GM12878 (cell line): ENCODE measurements at regions of chrX and their contacts with region 1.

Region 1: DNA sequence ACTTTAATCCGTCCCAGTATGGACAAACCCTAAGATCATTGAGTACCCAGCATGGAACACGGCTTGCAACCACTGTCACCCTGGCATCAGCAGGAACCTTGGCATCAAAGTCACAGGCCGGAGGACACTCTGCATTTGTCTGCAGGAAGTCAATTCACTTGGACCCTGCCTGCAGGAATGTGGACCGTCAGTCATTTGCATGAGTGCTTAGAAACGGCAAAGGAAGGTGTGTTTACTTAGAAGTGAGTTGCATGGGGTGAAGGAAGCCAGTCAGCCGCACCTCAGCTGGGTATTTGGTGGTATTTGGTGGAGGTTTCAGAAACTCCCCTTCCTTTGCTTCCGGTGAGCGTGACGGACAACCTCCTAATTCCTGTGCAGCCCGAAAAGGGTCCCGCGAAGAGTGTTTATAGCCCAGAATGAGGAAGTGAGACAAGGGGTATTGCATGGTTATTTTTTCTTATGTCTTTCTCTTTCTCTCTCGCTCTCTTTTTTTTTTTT is 15.5 kb downstream of the P2RY8 start:
- DNase-seq: peak; percentile 99
- ATAC-seq: peak; percentile 92
- H3K4me3 ChIP-seq: peak overlapping the region; percentile 50; the same call in 1 of the 2 replicates
- H3K27ac ChIP-seq: peak overlapping the region; percentile 91
- H3K4me1 ChIP-seq: peaks cover 44% of the 10 kb centered on the region
- H3K27me3 ChIP-seq: no peaks in the 10 kb centered on the region
- CTCF ChIP-seq: no peak
- EP300 ChIP-seq: peak; percentile 98 to 99
- POLR2A ChIP-seq: peak; percentile 48
- RAD21 ChIP-seq: peak; percentile 33; the same call in 1 of the 2 replicates

Region 2: GRCh38 chrX:1316527-1316926 is 205.0 kb before region 1 on chrX:
- CTCF ChIA-PET with region 1: no interaction called
- POLR2A ChIA-PET with region 1: no interaction called
- RAD21 ChIA-PET with region 1: no interaction called
- SMC1A ChIA-PET with region 1: no interaction called
- in situ Hi-C with region 1: no loop called
- intact Hi-C with region 1: no loop called
- DNase-seq: no peak
- ATAC-seq: no peak
- H3K4me3 ChIP-seq: no peak overlapping the region
- H3K27ac ChIP-seq: no peak overlapping the region
- H3K4me1 ChIP-seq: no peaks in the 10 kb centered on the region; the same call in 1 of the 2 replicates
- H3K27me3 ChIP-seq: no peaks in the 10 kb centered on the region
- CTCF ChIP-seq: no peak
- EP300 ChIP-seq: no peak
- POLR2A ChIP-seq: no peak
- RAD21 ChIP-seq: no peak

Region 3: GRCh38 chrX:1500701-1501624 is 20.5 kb before region 1 on chrX:
- CTCF ChIA-PET with region 1: no interaction called
- POLR2A ChIA-PET with region 1: no interaction called
- RAD21 ChIA-PET with region 1: no interaction called
- SMC1A ChIA-PET with region 1: no interaction called
- in situ Hi-C with region 1: no loop called
- intact Hi-C with region 1: loop called (anchors 1 kb)
- DNase-seq: peak; percentile 90
- ATAC-seq: peak; percentile 69
- H3K4me3 ChIP-seq: no peak overlapping the region
- H3K27ac ChIP-seq: peak overlapping the region; percentile 87
- H3K4me1 ChIP-seq: peaks cover 53% of the 10 kb centered on the region
- H3K27me3 ChIP-seq: no peaks in the 10 kb centered on the region
- CTCF ChIP-seq: no peak
- EP300 ChIP-seq: peak; percentile 49 to 71; a peak in 2 of 4 replicates
- POLR2A ChIP-seq: no peak
- RAD21 ChIP-seq: 0 out of 2 replicates have a peak, but pooled peaks have one; percentile 3

Region 4: GRCh38 chrX:1507511-1508463 is 13.7 kb before region 1 on chrX:
- CTCF ChIA-PET with region 1: no interaction called
- POLR2A ChIA-PET with region 1: no interaction called
- RAD21 ChIA-PET with region 1: no interaction called
- SMC1A ChIA-PET with region 1: no interaction called
- in situ Hi-C with region 1: no loop called
- intact Hi-C with region 1: loop called (anchors 1 kb)
- DNase-seq: peak; percentile 95
- ATAC-seq: peak; percentile 86
- H3K4me3 ChIP-seq: peak overlapping the region; percentile 9; the same call in 1 of the 2 replicates
- H3K27ac ChIP-seq: peak overlapping the region; percentile 89
- H3K4me1 ChIP-seq: peaks cover 48% of the 10 kb centered on the region
- H3K27me3 ChIP-seq: no peaks in the 10 kb centered on the region
- CTCF ChIP-seq: no peak
- EP300 ChIP-seq: peak; percentile 92 to 97
- POLR2A ChIP-seq: peak; percentile 75
- RAD21 ChIP-seq: peak; percentile 35

Region 5: DNA sequence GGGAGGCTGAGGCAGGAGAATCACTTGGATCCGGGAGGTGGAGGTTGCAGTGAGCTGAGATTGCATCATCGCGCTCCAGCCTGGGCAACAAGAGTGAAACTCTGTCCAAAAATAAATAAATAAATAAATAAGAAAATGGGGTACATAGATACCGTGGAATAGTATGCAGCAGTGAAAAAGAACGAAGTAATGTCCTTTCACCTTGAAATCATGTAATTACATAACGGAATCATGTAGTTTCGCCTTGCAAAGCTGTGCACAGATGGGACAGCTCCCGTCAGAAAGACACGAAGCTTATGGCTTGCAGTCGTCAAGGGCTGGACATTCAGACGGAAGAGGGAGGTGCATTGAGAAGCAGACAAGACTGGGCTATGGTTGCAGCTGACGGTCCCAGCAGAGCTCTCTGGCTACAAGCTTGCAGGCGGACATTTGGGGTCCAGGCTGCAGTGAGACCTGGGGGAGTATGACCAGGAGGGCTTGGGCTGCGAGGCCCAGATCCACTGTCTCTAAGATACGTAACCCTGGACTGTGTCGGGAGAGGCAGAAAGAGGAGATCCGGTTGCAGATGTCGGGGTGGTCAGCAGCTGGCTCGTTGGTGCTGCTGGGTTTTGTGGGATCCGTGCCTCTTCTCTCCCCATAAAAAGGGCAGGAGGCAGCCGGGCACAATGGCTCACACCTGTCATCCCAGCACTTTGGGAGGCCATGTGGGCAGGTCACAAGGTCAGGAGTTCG is 21.7 kb after region 1 on chrX:
- CTCF ChIA-PET with region 1: no interaction called
- POLR2A ChIA-PET with region 1: no interaction called
- RAD21 ChIA-PET with region 1: no interaction called
- SMC1A ChIA-PET with region 1: no interaction called
- in situ Hi-C with region 1: no loop called
- intact Hi-C with region 1: no loop called
- DNase-seq: no peak
- ATAC-seq: no peak
- H3K4me3 ChIP-seq: no peak overlapping the region
- H3K27ac ChIP-seq: no peak overlapping the region
- H3K4me1 ChIP-seq: no peaks in the 10 kb centered on the region
- H3K27me3 ChIP-seq: no peaks in the 10 kb centered on the region
- CTCF ChIP-seq: no peak
- EP300 ChIP-seq: no peak
- POLR2A ChIP-seq: no peak
- RAD21 ChIP-seq: no peak